ENCODE measurements at regions of chrX and their contacts with region 1.

Region 1: GRCh38 chrX:151996347-151996746 is 21.9 kb upstream of the GABRE start:
- DNase-seq: peak; percentile 47 to 55
- H3K4me3 ChIP-seq: no peak overlapping the region
- H3K4me3 Mint-ChIP-seq: peak overlapping the region; percentile 62
- H3K27ac Mint-ChIP-seq: peak overlapping the region; percentile 85
- H3K4me1 ChIP-seq: peaks cover 25% of the 10 kb centered on the region
- H3K4me1 Mint-ChIP-seq: peaks cover 11% of the 10 kb centered on the region
- H3K27me3 ChIP-seq: no peaks in the 10 kb centered on the region
- H3K27me3 Mint-ChIP-seq: no peaks in the 10 kb centered on the region
- CTCF ChIP-seq: no peak

Region 2: DNA sequence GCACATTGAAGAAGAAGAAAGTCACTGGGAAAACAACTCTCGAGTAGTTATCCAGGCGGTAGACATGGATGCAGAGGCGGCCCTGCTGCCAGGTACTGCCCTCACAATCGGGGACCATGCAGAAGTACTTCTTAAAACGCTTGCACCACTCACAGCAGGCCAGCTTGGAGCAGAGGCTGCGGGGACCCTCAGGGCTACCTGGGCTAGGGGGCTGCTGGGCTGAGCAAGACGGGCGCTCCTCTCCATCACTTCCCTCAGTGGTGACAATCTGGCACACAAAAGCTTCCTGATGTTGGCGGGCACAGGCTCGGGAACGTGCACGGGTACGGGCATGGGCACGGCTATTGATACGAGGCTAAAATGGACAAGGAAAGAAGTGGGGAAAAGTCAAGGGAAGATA is 41.6 kb before region 1 on chrX:
- CTCF ChIA-PET with region 1: no interaction called
- POLR2A ChIA-PET with region 1: no interaction called
- intact Hi-C with region 1: no loop called
- DNase-seq: no peak
- H3K4me3 ChIP-seq: no peak overlapping the region
- H3K4me3 Mint-ChIP-seq: no peak overlapping the region
- H3K27ac Mint-ChIP-seq: no peak overlapping the region
- H3K4me1 ChIP-seq: no peaks in the 10 kb centered on the region
- H3K4me1 Mint-ChIP-seq: no peaks in the 10 kb centered on the region
- H3K27me3 ChIP-seq: no peaks in the 10 kb centered on the region
- H3K27me3 Mint-ChIP-seq: no peaks in the 10 kb centered on the region
- CTCF ChIP-seq: no peak

Region 3: DNA sequence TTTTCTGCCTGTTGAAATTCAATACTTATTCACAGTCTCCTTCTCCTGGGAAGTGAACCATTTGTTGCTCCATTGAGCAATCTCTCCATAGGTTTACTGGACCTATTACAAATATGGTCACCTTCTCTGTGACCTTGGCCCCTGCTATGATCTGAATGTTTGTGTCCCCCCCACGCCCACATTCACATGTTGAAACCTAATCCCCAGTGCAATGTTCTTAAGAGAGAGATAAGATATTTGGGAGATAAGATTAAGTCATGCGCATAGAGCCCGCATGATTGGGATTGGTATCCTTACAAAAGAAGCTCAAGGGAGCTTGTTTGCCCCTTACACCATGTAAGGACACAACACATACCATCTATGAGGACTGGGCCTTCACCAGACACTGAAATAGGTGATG is 32.3 kb after region 1 on chrX:
- CTCF ChIA-PET with region 1: no interaction called
- POLR2A ChIA-PET with region 1: no interaction called
- intact Hi-C with region 1: loop called (anchors 1 kb)
- DNase-seq: peak; percentile 58 to 63
- H3K4me3 ChIP-seq: no peak overlapping the region
- H3K4me3 Mint-ChIP-seq: peak overlapping the region; percentile 55
- H3K27ac Mint-ChIP-seq: peak overlapping the region; percentile 90
- H3K4me1 ChIP-seq: peaks cover 5% of the 10 kb centered on the region; the same call in 1 of the 2 replicates
- H3K4me1 Mint-ChIP-seq: peaks cover 6% of the 10 kb centered on the region
- H3K27me3 ChIP-seq: no peaks in the 10 kb centered on the region
- H3K27me3 Mint-ChIP-seq: no peaks in the 10 kb centered on the region
- CTCF ChIP-seq: no peak